HEK293T (cell line): ENCODE measurements at regions of chr12 and their contacts with region 1.

Region 1: DNA sequence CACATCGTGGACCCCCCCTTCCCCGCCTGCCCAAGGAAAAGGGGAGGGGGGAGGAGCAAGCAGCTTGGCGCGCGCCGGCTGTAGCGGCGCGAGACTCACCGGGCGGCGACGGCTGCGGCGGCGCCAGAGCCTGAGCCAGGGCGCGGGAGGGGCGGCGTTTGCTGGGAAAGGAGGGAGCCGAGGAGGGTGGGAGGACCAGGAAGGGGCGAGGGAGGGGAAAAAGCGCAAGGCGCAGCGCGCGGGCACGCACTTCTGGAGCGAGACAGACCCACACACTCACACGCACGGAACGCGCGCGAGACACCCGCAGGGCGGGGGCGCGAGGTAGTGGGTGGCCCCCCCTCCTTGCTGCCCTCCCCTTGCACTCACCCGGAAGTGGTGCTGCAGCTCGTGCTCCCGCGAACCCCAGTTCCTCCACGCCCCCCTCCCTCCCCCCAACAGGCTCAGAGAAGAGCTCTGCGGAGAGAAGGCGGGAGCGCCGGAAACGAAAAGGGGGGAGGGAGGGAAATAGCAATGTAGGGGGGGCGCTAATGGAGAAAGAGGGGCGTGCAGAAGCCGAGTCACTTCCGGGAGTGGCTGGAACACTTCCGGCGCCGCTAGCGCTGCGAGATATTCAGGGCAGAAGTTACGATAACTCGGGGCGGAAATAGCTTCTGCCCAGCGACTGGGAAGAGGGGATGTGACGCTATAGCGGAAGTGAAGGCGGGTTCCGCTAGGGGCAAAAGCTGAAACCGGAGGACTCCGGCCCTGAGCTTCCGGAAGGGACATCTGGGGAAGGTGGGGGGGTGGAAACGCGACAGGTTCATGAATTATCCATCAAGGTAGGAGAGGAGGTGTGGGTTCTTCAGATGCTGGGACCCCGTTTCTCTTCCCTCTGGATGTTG is at the start of gene ZNF384:
- DNase-seq: peak; percentile 95

Region 2: DNA sequence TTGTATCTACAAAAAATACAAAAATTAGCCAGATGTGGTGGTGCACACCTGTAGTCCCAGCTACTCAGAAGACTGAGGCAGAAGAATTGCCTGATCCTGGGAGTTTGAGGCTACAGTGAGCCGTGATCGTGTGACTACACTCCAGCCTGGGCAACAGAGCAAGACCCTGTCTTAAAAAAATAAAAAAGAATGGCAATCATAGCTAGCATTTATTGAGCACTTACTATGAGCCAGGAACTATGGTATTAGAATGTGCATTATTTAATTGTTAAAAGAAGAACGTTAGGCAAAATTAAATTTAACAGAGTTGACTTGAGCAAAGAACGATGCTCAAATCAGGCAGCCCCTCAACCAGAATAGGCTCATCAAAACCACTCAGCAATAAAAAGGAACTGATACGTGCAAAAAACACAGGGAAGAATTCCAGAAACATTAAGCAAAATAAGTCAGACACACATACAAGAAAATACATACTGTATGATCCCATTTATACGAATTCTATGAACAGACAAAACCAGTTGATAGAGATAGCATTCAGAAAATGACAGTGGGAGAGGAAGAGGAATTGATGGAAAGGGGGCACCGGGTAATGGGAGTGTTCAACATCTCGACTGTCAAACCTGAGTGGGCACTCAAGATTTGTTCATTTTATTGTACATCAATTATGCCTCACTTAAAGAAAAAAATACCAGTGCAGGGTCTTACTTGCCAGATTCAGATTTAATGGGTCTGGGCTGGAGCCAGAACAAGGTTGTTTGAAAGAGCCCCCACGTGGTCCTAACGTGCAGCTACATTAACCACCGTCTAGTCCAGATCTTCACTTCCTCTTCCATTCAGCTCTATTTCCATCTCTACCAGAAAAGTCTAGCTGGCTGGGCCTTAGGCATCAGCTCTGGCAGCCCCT is 321.9 kb before region 1 on chr12:
- CTCF ChIA-PET with region 1: no interaction called
- POLR2A ChIA-PET with region 1: no interaction called
- DNase-seq: peak; percentile 59

Region 3: DNA sequence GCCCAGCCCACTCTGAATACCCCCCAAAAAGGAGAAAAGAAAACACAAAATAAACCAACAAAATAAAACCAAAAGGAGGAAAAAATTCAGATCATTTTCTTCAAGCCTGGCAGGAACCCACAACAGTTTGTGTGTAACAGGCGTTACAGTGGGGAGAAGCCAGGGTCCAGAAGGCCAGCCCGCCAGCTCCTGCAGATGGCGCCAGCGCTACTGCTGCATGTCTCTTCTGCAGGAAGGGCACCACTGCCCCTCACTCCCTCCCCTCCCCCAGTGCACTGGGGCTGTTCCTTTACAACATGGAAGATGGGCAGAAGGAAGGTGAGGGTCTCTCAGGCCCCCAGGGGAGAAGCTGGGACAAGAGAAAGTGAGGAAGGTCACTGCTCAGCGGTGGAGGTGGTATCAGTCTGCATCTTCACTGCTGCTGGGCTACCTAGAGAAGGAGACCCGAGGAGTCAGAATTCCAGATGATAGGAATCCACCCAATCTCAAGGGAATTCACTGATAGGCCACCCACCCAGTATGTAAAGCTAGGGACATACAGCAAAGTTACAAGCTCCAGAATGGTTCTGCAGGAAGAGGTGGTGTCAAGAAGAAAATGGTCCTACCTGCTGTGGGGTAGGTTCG is 118.9 kb before region 1 on chr12:
- CTCF ChIA-PET with region 1: interaction called, 5 read pairs
- POLR2A ChIA-PET with region 1: interaction called, 19 read pairs
- DNase-seq: peak; percentile 69

Region 4: GRCh38 chr12:6607751-6608591 is 81.3 kb before region 1 on chr12:
- CTCF ChIA-PET with region 1: interaction called, 11 read pairs
- POLR2A ChIA-PET with region 1: interaction called, 39 read pairs
- DNase-seq: peak; percentile 42

Region 5: GRCh38 chr12:6613776-6614512 is 75.3 kb before region 1 on chr12:
- CTCF ChIA-PET with region 1: interaction called, 11 read pairs
- POLR2A ChIA-PET with region 1: interaction called, 39 read pairs
- DNase-seq: peak; percentile 87

Region 6: GRCh38 chr12:6662906-6663742 is 26.1 kb before region 1 on chr12 and contains the start of gene ING4:
- CTCF ChIA-PET with region 1: interaction called, 7 read pairs
- POLR2A ChIA-PET with region 1: interaction called, 59 read pairs
- DNase-seq: peak; percentile 98

Region 7: DNA sequence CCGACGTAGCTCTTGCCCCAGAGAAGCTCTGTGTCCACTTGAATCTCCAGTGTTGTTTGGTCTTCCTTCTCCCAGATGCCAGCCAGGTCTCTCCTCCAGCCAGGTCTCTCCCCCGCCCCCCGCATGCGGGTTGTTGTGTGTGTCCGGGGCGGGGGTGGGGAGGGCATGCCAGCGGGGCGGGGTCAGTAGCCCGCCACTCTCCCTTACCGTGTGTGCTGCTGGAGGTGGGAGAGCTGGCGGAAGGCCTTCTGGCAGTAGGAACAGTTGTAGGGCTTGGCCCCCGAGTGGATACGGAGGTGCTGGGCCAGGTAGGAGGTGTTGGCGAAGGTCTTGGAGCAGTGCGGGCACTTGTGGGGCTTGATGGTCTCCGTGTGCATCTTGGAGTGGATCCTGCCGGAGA is 17.1 kb before region 1 on chr12:
- CTCF ChIA-PET with region 1: interaction called, 14 read pairs
- POLR2A ChIA-PET with region 1: interaction called, 59 read pairs
- DNase-seq: no peak

Region 8: DNA sequence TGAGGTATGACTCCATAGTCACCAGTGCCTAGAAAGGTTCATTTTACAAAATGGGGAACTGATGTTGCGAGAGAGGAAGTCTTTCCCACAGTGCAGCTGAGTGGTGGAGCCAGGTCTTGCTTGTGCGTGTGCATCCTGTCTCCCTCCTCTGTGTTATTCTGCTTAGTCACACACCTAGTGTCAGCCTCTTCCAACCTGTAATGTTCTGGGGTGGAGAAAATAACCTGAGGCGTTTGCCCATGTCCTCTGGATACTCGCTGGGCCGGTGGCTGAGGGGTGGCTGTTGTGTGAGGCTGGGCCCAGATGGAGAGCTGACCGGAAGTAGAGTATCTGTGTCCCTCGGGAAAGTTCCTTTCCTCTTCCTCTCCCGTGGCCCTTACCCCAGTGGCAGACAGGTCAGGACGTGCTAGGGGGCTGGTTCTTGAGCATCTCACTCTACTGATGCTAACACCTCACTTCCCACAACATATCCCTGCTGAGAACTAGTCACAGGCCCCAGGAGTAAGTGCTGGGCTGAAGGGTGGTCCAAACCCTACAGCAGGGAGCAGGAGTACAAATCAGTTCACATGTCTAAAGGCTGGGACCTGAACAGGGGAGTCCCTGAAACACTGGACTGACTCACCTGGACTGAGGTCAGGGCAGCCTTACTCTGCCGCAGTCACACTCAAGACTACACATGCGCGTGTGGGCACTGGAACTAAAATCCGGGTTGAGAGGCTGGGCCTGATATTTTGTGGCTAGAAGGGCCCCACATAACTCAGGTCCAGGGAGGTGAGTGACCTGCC is 56.7 kb after region 1 on chr12:
- CTCF ChIA-PET with region 1: no interaction called
- POLR2A ChIA-PET with region 1: no interaction called
- DNase-seq: no peak

Region 9: GRCh38 chr12:6764011-6764828 is 75.0 kb after region 1 on chr12:
- CTCF ChIA-PET with region 1: no interaction called
- POLR2A ChIA-PET with region 1: interaction called, 16 read pairs
- DNase-seq: peak; percentile 94

Region 10: GRCh38 chr12:6799147-6799546 is 109.9 kb after region 1 on chr12:
- CTCF ChIA-PET with region 1: no interaction called
- POLR2A ChIA-PET with region 1: no interaction called
- DNase-seq: no peak